ENCODE measurements at regions of chr16 and their contacts with region 1.

Region 1: GRCh38 chr16:23131931-23132621 is 17.2 kb downstream of the USP31 start:
- DNase-seq: no peak
- ATAC-seq: peak; percentile 31 to 53
- H3K4me3 ChIP-seq: no peak overlapping the region
- H3K27ac ChIP-seq: peak overlapping the region; percentile 91
- H3K4me1 ChIP-seq: peaks cover 14% of the 10 kb centered on the region
- H3K27me3 ChIP-seq: no peaks in the 10 kb centered on the region

Region 2: GRCh38 chr16:23081675-23082119 is 50.4 kb before region 1 on chr16:
- intact Hi-C with region 1: loop called in 1 of 4 experiments (anchors 10 kb)
- DNase-seq: no peak
- ATAC-seq: no peak
- H3K4me3 ChIP-seq: no peak overlapping the region
- H3K27ac ChIP-seq: no peak overlapping the region
- H3K4me1 ChIP-seq: no peaks in the 10 kb centered on the region
- H3K27me3 ChIP-seq: no peaks in the 10 kb centered on the region

Measured in right cardiac atrium (tissue), 5 donors.